A549 (cell line): ENCODE measurements at regions of chr1 and their contacts with region 1.

Region 1: GRCh38 chr1:206663832-206664652 is 20.7 kb upstream of the MAPKAPK2 start:
- DNase-seq: peak; percentile 64 to 65
- ATAC-seq: peak; percentile 84 to 91
- H3K4me3 ChIP-seq: no peak overlapping the region
- H3K27ac ChIP-seq: peak overlapping the region in 1 of 2 experiments; percentile 37; a peak in 2 of 6 replicates
- H3K4me1 ChIP-seq: peaks cover 7% of the 10 kb centered on the region; the same call in 1 of the 3 replicates
- CTCF ChIP-seq: peak; percentile 86
- EP300 ChIP-seq: no peak
- POLR2A ChIP-seq: no peak
- RAD21 ChIP-seq: peak; percentile 82 to 87

Region 2: GRCh38 chr1:206583707-206584648 is 80.1 kb before region 1 on chr1:
- CTCF ChIA-PET with region 1: interaction called, 12 read pairs
- POLR2A ChIA-PET with region 1: no interaction called
- DNase-seq: peak; percentile 62 to 72
- ATAC-seq: peak; percentile 79 to 92
- H3K4me3 ChIP-seq: no peak overlapping the region
- H3K27ac ChIP-seq: no peak overlapping the region
- H3K4me1 ChIP-seq: no peaks in the 10 kb centered on the region
- CTCF ChIP-seq: peak; percentile 94
- EP300 ChIP-seq: no peak
- POLR2A ChIP-seq: no peak
- RAD21 ChIP-seq: peak; percentile 86 to 93

Region 3: GRCh38 chr1:206635080-206635977 is 28.7 kb before region 1 on chr1 and contains the start of gene DYRK3:
- CTCF ChIA-PET with region 1: interaction called, 452 read pairs
- POLR2A ChIA-PET with region 1: interaction called, 20 read pairs
- DNase-seq: peak; percentile 87 to 93
- ATAC-seq: peak; percentile 91 to 95
- H3K4me3 ChIP-seq: peak within 1 kb of the TSS; percentile 91
- H3K27ac ChIP-seq: peak within 1 kb of the TSS; percentile 88 to 89
- H3K4me1 ChIP-seq: peaks cover 32% of the 10 kb centered on the region; the same call in 2 of the 3 replicates
- CTCF ChIP-seq: no peak
- EP300 ChIP-seq: no peak
- POLR2A ChIP-seq: peak; percentile 91
- RAD21 ChIP-seq: no peak; a peak in 1 of 5 replicates
- polyA plus RNA-seq, gene DYRK3: 7.3 and 9.3 TPM in 2 replicates

Region 4: DNA sequence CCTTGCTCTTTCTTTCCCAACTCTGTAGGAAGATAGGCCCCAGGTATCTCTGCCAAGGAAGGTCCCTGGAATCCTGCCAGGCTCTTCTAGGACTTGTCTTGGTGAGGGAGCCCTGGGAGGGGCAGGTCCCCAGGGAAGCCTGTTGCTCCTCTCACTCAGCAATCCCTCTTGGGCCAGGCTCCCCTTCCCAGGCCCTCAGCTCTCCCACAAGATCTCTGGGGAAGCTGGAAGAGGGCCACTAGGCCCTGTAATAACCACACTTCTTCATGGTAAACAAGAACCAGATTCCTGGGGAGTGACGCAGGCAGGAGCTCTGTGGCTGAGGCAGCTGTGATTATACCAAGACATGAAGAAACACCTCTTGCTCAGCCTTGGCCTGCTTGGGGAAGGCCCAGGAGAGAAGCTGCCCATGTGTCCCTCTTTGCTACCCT is 10.7 kb after region 1 on chr1:
- CTCF ChIA-PET with region 1: interaction called, 97 read pairs
- POLR2A ChIA-PET with region 1: no interaction called
- DNase-seq: peak; percentile 46 to 85
- ATAC-seq: peak; percentile 96
- H3K4me3 ChIP-seq: no peak overlapping the region
- H3K27ac ChIP-seq: peak overlapping the region; percentile 64 to 84
- H3K4me1 ChIP-seq: peaks cover 29% of the 10 kb centered on the region
- CTCF ChIP-seq: no peak
- EP300 ChIP-seq: no peak
- POLR2A ChIP-seq: no peak
- RAD21 ChIP-seq: no peak

Region 5: GRCh38 chr1:206706298-206706791 is 42.3 kb after region 1 on chr1:
- CTCF ChIA-PET with region 1: interaction called, 14 read pairs
- POLR2A ChIA-PET with region 1: interaction called, 5 read pairs
- DNase-seq: no peak
- ATAC-seq: no peak
- H3K4me3 ChIP-seq: no peak overlapping the region
- H3K27ac ChIP-seq: peak overlapping the region; percentile 30 to 74; a peak in 3 of 6 replicates
- H3K4me1 ChIP-seq: peaks cover 72% of the 10 kb centered on the region
- CTCF ChIP-seq: no peak
- EP300 ChIP-seq: no peak
- POLR2A ChIP-seq: no peak
- RAD21 ChIP-seq: no peak

Region 6: DNA sequence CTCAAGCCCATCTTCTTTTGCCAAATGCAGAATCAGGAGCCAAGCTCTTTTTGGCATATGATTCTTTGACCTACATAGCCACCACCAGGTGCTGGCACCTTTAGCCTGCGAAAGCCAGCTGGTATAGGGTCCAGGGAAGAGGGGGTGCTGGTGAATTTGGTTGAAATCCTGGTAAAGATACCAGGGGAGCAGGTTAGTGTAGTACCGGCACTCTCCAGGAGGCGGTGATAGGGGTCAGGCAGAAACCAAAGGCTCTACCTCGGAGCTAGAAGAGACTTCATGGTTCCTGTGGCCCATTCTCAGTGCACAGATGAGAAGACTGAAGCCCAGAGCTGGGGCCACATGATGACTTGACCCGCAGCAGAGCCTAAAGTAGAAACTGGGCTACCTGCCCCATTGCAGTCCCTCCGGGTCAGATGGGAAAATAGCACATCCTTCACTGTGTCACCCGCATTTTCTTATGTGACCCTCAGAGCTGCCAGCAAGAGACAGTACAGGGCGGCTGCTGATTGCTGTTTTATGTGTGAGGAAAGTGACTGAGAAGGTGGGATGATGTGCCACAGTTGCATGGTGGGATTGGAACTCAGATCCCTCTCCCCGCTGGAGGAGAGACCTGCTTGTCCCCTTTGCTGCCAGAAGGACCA is 70.6 kb after region 1 on chr1:
- CTCF ChIA-PET with region 1: interaction called, 10 read pairs
- POLR2A ChIA-PET with region 1: no interaction called
- DNase-seq: peak; percentile 43 to 78
- ATAC-seq: peak; percentile 60 to 84; a peak in 4 of 6 replicates
- H3K4me3 ChIP-seq: no peak overlapping the region
- H3K27ac ChIP-seq: no peak overlapping the region
- H3K4me1 ChIP-seq: peaks cover 6% of the 10 kb centered on the region; the same call in 1 of the 3 replicates
- CTCF ChIP-seq: peak; percentile 65
- EP300 ChIP-seq: no peak
- POLR2A ChIP-seq: no peak
- RAD21 ChIP-seq: peak; percentile 73 to 75

Region 7: GRCh38 chr1:206826405-206826804 is 162.4 kb after region 1 on chr1:
- CTCF ChIA-PET with region 1: no interaction called
- POLR2A ChIA-PET with region 1: no interaction called
- DNase-seq: no peak
- ATAC-seq: no peak
- H3K4me3 ChIP-seq: no peak overlapping the region
- H3K27ac ChIP-seq: 0 out of 6 replicates have a peak overlapping the region, but pooled peaks of 1 of the 2 experiments have one; percentile 23
- H3K4me1 ChIP-seq: no peaks in the 10 kb centered on the region
- CTCF ChIP-seq: no peak
- EP300 ChIP-seq: no peak
- POLR2A ChIP-seq: no peak
- RAD21 ChIP-seq: no peak

Region 8: DNA sequence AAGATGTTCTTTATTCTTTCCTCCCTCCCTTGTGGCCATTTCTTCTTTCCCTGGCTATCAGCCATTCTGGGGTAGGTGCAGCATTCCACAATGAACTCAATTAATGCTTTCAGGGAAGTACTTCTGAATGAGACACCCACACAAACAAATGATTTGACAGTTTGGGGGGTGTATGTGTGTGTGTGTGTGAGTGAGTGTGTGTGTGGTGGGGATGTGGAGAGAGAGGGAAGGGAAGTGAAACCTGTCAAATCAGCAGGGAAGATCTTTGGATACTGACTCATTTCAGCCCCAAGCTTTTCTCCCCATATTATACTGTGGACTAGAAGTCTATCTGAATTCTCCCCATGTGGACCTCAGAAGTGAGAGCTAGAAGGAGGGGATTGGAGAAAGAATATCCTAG is 1401.8 kb after region 1 on chr1:
- CTCF ChIA-PET with region 1: no interaction called
- POLR2A ChIA-PET with region 1: no interaction called
- DNase-seq: no peak
- ATAC-seq: no peak
- H3K4me3 ChIP-seq: no peak overlapping the region
- H3K27ac ChIP-seq: no peak overlapping the region
- H3K4me1 ChIP-seq: no peaks in the 10 kb centered on the region
- CTCF ChIP-seq: no peak
- EP300 ChIP-seq: no peak
- POLR2A ChIP-seq: no peak
- RAD21 ChIP-seq: no peak